ENCODE measurements at regions of chr14 and their contacts with region 1.

Region 1: GRCh38 chr14:87944987-87945604 is 47.9 kb downstream of the GALC start:
- DNase-seq: no peak
- ATAC-seq: 0 out of 3 replicates have a peak, but pooled peaks have one; percentile 22
- H3K4me3 ChIP-seq: no peak overlapping the region
- H3K27ac ChIP-seq: no peak overlapping the region
- H3K4me1 ChIP-seq: peaks cover 9% of the 10 kb centered on the region
- H3K27me3 ChIP-seq: no peaks in the 10 kb centered on the region
- CTCF ChIP-seq: peak; percentile 47 to 69 (median 54); a peak in 4 of 6 replicates
- EP300 ChIP-seq: no peak
- POLR2A ChIP-seq: no peak
- RAD21 ChIP-seq: peak; percentile 81

Region 2: GRCh38 chr14:87745507-87746118 is 199.5 kb before region 1 on chr14:
- CTCF ChIA-PET with region 1: interaction called, 13 read pairs
- POLR2A ChIA-PET with region 1: no interaction called
- RAD21 ChIA-PET with region 1: no interaction called
- SMC1A ChIA-PET with region 1: no interaction called
- in situ Hi-C with region 1: no loop called
- intact Hi-C with region 1: no loop called
- DNase-seq: no peak
- ATAC-seq: peak; percentile 83
- H3K4me3 ChIP-seq: no peak overlapping the region
- H3K27ac ChIP-seq: no peak overlapping the region
- H3K4me1 ChIP-seq: no peaks in the 10 kb centered on the region
- H3K27me3 ChIP-seq: no peaks in the 10 kb centered on the region
- CTCF ChIP-seq: peak; percentile 70 to 83 (median 77)
- EP300 ChIP-seq: no peak
- POLR2A ChIP-seq: no peak
- RAD21 ChIP-seq: peak; percentile 39

Region 3: GRCh38 chr14:87992718-87993628 is 47.9 kb after region 1 on chr14 and contains the start of gene GALC:
- CTCF ChIA-PET with region 1: interaction called, 22 read pairs
- POLR2A ChIA-PET with region 1: interaction called, 3 read pairs
- RAD21 ChIA-PET with region 1: interaction called, 9 read pairs
- SMC1A ChIA-PET with region 1: interaction called, 11 read pairs
- in situ Hi-C with region 1: no loop called
- intact Hi-C with region 1: loop called (anchors 2 kb)
- DNase-seq: peak; percentile 62
- ATAC-seq: peak; percentile 82
- H3K4me3 ChIP-seq: peak within 1 kb of the TSS; percentile 75
- H3K27ac ChIP-seq: peak within 1 kb of the TSS; percentile 84
- H3K4me1 ChIP-seq: peaks cover 26% of the 10 kb centered on the region
- H3K27me3 ChIP-seq: no peaks in the 10 kb centered on the region
- CTCF ChIP-seq: 0 out of 6 replicates have a peak, but pooled peaks of 1 of the 3 experiments have one; percentile 4
- EP300 ChIP-seq: peak; percentile 73 to 81; a peak in 3 of 4 replicates
- POLR2A ChIP-seq: peak; percentile 88
- RAD21 ChIP-seq: peak; percentile 23; the same call in 1 of the 2 replicates
- polyA plus RNA-seq, gene GALC: 1.3 to 1.9 TPM

Region 4: DNA sequence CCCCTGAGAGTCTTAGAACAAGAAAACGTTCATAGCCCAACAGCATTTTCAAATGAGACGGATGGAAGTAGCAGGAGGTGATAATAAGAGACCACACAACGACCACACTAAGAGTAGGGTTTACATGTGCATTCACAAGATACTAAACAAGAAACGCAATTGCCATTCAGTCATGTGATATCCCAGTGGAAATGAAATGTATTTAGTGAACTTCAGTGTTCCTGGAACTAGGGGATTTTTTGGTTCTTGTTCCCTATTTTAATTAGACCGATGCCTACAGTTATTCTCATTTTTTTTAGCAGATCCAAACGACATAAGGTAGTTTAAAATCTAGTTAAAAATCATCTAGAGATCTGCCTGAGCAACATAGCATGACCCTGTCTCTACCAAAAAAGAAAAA is 209.8 kb after region 1 on chr14:
- CTCF ChIA-PET with region 1: interaction called, 3 read pairs
- POLR2A ChIA-PET with region 1: no interaction called
- RAD21 ChIA-PET with region 1: no interaction called
- SMC1A ChIA-PET with region 1: no interaction called
- in situ Hi-C with region 1: loop called (anchors 5 kb)
- intact Hi-C with region 1: no loop called
- DNase-seq: no peak
- ATAC-seq: no peak
- H3K4me3 ChIP-seq: no peak overlapping the region
- H3K27ac ChIP-seq: no peak overlapping the region
- H3K4me1 ChIP-seq: no peaks in the 10 kb centered on the region
- H3K27me3 ChIP-seq: no peaks in the 10 kb centered on the region; a peak in 1 of 4 replicates
- CTCF ChIP-seq: no peak
- EP300 ChIP-seq: no peak
- POLR2A ChIP-seq: no peak
- RAD21 ChIP-seq: no peak

Region 5: GRCh38 chr14:88189417-88190191 is 244.5 kb after region 1 on chr14:
- CTCF ChIA-PET with region 1: interaction called, 76 read pairs
- POLR2A ChIA-PET with region 1: no interaction called
- RAD21 ChIA-PET with region 1: interaction called, 29 read pairs
- SMC1A ChIA-PET with region 1: interaction called, 49 read pairs
- in situ Hi-C with region 1: loop called (anchors 10 kb)
- intact Hi-C with region 1: loop called (anchors 5 kb)
- DNase-seq: peak; percentile 25
- ATAC-seq: peak; percentile 96
- H3K4me3 ChIP-seq: no peak overlapping the region
- H3K27ac ChIP-seq: no peak overlapping the region
- H3K4me1 ChIP-seq: peaks cover 10% of the 10 kb centered on the region; the same call in 1 of the 2 replicates
- H3K27me3 ChIP-seq: no peaks in the 10 kb centered on the region; a peak in 1 of 4 replicates
- CTCF ChIP-seq: peak; percentile 64 to 75 (median 69)
- EP300 ChIP-seq: no peak
- POLR2A ChIP-seq: no peak
- RAD21 ChIP-seq: peak; percentile 82

Region 6: DNA sequence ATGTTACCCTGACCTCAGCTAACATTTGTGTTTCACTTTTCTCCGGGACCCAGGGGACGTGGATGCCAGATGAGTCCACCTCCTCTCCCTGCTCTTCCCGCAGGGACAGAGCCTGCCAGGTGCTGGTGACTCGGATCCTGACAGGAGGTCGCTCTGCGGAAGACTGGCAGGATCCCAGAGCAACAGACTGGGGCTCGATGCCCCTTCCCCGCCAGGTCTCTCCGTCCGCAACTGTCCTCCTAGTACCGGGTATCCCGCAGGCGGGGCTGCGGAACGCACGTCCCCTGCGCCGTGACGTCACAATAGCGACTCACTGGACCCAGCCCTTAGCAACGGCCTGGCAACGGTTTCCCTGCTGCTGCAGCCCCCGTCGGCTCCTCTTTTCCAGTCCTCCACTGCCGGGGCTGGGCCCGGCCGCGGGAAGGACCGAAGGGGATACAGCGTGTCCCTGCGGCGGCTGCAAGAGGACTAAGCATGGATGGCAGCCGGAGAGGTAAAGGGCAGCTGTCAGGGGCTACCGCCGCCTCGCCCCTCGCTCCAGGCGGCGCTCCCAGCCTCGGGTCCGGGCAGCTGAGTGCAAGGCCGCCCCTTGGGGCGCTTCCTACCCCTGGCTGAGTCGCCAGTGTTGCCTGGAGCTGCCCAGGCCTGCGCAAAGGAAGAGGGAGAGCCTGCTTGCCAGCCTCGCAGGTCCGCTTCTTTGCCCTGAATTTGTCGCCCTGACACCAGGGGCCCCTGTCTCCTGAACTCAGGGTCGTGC is 440.4 kb after region 1 on chr14 and contains the start of gene SPATA7:
- CTCF ChIA-PET with region 1: interaction called, 11 read pairs
- POLR2A ChIA-PET with region 1: no interaction called
- RAD21 ChIA-PET with region 1: interaction called, 3 read pairs
- SMC1A ChIA-PET with region 1: interaction called, 16 read pairs
- in situ Hi-C with region 1: no loop called
- intact Hi-C with region 1: loop called (anchors 10 kb)
- DNase-seq: peak; percentile 25
- ATAC-seq: peak; percentile 99
- H3K4me3 ChIP-seq: peak within 1 kb of the TSS; percentile 83
- H3K27ac ChIP-seq: no peak within 1 kb of the TSS
- H3K4me1 ChIP-seq: peaks cover 2% of the 10 kb centered on the region; the same call in 1 of the 2 replicates
- H3K27me3 ChIP-seq: peaks cover 0 to 3% of the 10 kb centered on the region in 2 experiments; a peak in 1 of 4 replicates
- CTCF ChIP-seq: no peak
- EP300 ChIP-seq: no peak
- POLR2A ChIP-seq: peak; percentile 83
- RAD21 ChIP-seq: no peak
- polyA plus RNA-seq, gene SPATA7: 0.39 to 0.73 TPM

Measured in GM12878 (cell line).